H1 (cell line): ENCODE measurements at regions of chr14 and their contacts with region 1.

Region 1: GRCh38 chr14:67571272-67571850 is 28.7 kb downstream of the PIGH start:
- DNase-seq: peak; percentile 21 to 82
- H3K4me3 ChIP-seq: no peak overlapping the region
- H3K27ac ChIP-seq: no peak overlapping the region
- H3K4me1 ChIP-seq: no peaks in the 10 kb centered on the region
- H3K27me3 ChIP-seq: no peaks in the 10 kb centered on the region
- CTCF ChIP-seq: peak; percentile 92 to 97 (median 96)
- EP300 ChIP-seq: no peak
- POLR2A ChIP-seq: no peak
- RAD21 ChIP-seq: peak; percentile 85 to 87

Region 2: DNA sequence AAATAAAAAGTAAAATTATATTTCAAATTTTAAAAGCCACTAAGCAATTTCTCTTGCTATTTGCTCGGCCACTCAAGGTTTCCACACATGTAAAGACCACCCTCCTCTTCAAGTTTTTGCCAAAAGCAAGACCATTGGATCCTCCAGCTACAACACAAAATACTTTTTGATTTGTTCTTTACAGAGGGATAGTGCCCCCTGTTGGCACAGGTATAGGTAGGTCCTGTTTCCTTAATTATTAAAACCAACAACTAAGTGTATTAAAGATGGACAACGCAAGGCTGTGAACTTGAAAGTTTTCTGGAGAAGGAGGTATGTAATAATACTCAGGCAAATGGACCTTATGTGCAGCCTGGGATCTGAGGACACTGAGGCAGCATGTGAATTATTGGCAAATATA is 235.6 kb before region 1 on chr14:
- CTCF ChIA-PET with region 1: no interaction called
- POLR2A ChIA-PET with region 1: no interaction called
- DNase-seq: no peak
- H3K4me3 ChIP-seq: no peak overlapping the region
- H3K27ac ChIP-seq: no peak overlapping the region
- H3K4me1 ChIP-seq: no peaks in the 10 kb centered on the region
- H3K27me3 ChIP-seq: no peaks in the 10 kb centered on the region
- CTCF ChIP-seq: peak in 2 of 3 experiments; percentile 43 to 58; a peak in 2 of 4 replicates
- EP300 ChIP-seq: no peak
- POLR2A ChIP-seq: no peak
- RAD21 ChIP-seq: peak; percentile 55 to 56

Region 3: DNA sequence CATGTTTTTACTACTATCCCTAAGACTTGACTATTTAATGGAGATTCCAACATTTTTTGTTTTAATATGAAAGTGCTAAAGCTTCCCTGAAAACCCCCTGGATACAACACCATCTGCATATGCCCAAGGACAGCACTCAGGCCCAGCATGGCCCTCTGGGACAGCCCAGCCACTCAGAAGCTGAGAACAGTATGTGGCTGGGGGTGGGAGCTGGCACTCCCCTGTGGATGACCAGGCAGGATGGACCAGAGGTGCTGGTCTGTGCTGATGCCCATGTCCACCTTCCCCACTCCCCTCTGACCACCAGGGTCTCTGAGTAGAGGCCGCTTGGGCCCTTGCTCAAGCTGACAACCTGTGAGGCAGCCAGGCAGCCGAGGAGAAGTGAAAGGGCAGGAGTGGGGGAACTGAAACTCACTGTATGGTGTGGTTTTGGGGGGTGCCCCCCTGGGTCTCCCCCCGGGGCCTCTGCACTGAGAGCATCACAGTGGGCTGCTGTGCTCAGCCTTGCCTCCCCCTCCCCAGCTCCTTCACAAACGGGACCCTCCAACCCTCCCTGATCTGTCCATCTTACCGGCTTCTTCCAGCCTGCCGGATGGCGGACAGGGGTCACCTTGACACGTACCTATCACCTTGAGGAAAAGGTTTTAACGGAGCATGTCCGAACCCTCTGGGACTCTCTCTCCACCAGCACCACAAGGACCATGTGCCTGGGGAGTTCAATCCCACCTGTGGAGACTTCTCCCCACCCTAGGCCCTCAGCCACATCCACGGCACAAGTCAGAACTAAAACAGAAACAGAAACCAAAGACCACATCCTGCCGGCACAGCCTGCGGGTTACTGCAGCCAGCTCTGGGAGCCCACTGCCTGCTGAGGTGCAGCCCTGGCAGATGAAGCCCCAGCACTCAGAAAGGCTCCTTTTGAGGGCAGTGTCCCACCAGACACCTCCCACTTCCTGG is 83.1 kb before region 1 on chr14 and contains the start of gene TMEM229B:
- CTCF ChIA-PET with region 1: interaction called, 11 read pairs
- POLR2A ChIA-PET with region 1: no interaction called
- DNase-seq: no peak
- H3K4me3 ChIP-seq: no peak within 1 kb of the TSS
- H3K27ac ChIP-seq: no peak within 1 kb of the TSS
- H3K4me1 ChIP-seq: peaks cover 0 to 10% (median 5%) of the 10 kb centered on the region in 4 experiments; a peak in 4 of 7 replicates
- H3K27me3 ChIP-seq: no peaks in the 10 kb centered on the region
- CTCF ChIP-seq: no peak
- EP300 ChIP-seq: no peak
- POLR2A ChIP-seq: no peak
- RAD21 ChIP-seq: no peak
- total RNA-seq, gene TMEM229B: 0.50 and 0.73 TPM in 2 replicates

Region 4: DNA sequence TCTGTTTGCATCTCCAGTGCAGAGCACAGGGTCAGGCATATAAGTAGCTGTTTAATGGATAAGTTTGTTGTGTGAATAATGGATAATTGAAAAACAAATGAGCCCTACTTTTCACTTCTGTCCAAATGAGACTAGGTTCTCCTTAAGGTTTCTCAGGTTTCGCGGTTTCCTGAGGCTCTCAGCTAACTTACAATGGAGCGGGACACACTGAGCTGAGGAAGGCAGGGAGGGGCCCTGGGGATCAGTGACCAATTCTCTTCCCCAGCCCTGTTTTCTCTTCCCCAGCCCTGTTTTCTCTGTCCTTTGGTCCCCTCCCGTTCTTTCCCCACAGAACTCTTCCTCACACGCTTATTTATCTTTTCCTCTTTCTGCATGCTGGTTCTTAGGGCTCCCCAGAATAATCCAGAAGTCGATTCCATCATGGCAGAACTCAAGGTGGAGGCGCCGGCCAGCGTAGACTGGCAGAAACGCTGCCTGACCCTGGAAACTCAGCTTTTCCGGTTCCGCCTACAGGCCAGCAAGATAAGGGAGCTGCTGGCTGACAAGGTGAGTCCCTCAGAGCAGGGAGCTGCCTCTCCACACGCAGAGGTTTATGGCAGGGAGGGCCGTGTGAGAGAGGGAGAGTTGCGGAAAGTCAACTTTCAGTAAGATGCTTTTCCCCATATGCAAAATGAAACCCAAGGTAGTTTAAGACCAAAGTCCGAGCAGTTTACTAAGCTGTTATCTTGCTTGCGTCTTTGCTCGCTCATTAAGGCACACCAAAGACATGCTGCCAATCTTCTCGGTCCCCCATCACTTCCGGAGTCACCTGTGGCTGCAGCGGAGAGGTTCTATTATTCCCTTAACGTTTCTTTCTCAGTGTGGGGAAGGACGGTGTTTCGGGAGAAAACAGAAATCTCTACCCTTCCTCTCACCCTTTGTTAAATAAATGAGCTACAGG is 29.6 kb before region 1 on chr14:
- CTCF ChIA-PET with region 1: interaction called, 924 read pairs
- POLR2A ChIA-PET with region 1: interaction called, 10 read pairs
- DNase-seq: peak in 1 of 2 experiments; percentile 69
- H3K4me3 ChIP-seq: peak overlapping the region; percentile 20 to 50 (median 30); a peak in 5 of 8 replicates
- H3K27ac ChIP-seq: peak overlapping the region; percentile 76
- H3K4me1 ChIP-seq: peaks cover 6 to 20% (median 13%) of the 10 kb centered on the region in 4 experiments
- H3K27me3 ChIP-seq: no peaks in the 10 kb centered on the region
- CTCF ChIP-seq: no peak
- EP300 ChIP-seq: no peak
- POLR2A ChIP-seq: peak; percentile 66 to 75
- RAD21 ChIP-seq: no peak

Region 5: DNA sequence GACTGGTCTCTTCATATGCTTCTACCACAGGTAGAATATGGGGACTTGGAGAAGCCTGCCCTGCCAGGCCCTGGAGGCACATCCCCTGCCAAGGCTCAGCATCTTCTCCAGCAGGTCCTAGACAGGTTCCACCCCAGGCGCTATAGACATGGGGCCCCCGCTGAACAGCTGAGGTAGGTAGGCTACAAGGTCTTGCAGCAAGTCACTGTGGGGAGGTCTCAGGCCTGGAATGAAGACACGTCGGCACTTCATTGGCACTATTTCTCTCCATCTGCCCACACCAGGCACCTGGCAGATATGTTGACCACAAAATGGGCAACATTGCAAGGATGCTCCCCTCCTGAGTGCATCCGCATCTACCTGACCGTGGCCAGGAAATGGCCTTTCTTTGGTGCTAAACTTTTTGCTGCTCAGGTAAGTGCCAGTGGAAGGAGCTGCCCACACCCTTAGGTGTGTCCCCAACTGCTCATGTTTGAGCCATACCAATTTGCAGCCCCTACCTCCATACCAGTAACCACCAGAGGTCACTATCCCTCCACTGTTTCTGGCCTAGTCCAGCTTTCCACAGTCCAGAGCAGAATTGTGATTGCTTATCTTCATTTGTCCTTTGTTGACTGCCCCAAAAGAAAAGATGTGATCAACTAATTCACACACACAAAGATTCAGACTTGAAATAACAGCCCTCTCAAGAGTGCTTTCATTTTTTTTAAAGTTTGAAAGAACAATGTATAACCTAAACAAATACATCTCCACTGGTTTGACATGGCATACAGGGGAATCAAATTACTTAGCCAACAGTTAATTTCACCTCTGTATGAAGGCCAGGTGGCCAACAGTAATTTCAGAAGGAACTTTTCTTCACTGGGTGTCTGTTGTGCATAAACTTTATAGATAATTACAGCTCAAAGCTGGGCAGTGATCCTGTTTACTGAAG is 12.6 kb after region 1 on chr14:
- CTCF ChIA-PET with region 1: interaction called, 127 read pairs
- POLR2A ChIA-PET with region 1: interaction called, 6 read pairs
- DNase-seq: no peak
- H3K4me3 ChIP-seq: no peak overlapping the region
- H3K27ac ChIP-seq: no peak overlapping the region
- H3K4me1 ChIP-seq: no peaks in the 10 kb centered on the region
- H3K27me3 ChIP-seq: no peaks in the 10 kb centered on the region
- CTCF ChIP-seq: peak; percentile 54 to 83 (median 80)
- EP300 ChIP-seq: no peak
- POLR2A ChIP-seq: no peak
- RAD21 ChIP-seq: peak; percentile 89 to 90

Region 6: DNA sequence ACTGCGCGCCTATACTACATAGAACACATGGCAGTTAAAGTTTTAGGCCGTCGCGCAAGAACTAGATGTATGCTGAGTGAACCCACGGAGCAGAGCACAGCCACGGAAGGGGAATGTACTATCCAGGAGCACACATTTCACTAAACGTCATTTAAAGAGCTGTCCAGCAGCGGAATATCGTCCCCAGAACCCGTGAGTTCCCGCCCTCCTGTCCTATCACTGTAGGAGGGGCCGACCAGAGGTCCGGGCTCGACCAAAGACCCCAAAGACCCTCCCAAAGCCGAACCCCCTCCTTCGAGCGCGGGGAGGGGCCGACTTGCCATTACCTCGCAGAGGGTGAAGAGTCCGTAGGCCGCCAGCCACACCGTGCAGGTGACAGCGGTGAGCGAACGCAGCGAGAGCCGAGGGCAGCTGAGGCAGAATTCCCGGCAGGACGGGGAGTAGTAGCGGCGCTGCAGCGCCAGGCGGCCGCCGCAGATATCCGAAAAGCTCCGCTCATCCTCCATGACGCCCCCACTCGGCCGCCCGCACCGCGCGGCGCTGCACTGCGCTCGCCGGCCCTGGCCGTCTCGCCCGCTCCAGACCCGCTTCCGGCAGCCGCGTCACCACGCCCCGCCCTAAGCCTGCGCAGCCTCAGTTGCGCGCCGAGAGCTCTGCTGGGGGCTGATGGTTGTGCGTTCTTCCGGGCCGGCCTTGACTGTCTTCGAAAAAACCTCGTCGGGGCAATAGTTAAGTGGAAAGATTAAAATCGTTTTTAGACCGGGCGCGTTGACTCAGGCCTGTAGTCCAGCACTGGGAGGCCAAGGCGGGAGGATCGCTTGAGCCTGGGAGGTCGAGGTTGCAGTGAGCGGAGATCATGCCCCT is 28.6 kb after region 1 on chr14 and contains the start of gene PIGH:
- CTCF ChIA-PET with region 1: interaction called, 11 read pairs
- POLR2A ChIA-PET with region 1: no interaction called
- DNase-seq: peak; percentile 46 to 95
- H3K4me3 ChIP-seq: peak within 1 kb of the TSS; percentile 60 to 79 (median 70)
- H3K27ac ChIP-seq: no peak within 1 kb of the TSS
- H3K4me1 ChIP-seq: no peaks in the 10 kb centered on the region; a peak in 1 of 7 replicates
- H3K27me3 ChIP-seq: peaks cover 4 to 41% (median 22%) of the 10 kb centered on the region in 4 experiments
- CTCF ChIP-seq: peak; percentile 53 to 97 (median 66)
- EP300 ChIP-seq: no peak
- POLR2A ChIP-seq: peak in 1 of 2 experiments; percentile 59; a peak in 2 of 3 replicates
- RAD21 ChIP-seq: peak; percentile 37 to 51; a peak in 3 of 4 replicates
- total RNA-seq, gene PIGH: 6.2 and 7.2 TPM in 2 replicates

Region 7: DNA sequence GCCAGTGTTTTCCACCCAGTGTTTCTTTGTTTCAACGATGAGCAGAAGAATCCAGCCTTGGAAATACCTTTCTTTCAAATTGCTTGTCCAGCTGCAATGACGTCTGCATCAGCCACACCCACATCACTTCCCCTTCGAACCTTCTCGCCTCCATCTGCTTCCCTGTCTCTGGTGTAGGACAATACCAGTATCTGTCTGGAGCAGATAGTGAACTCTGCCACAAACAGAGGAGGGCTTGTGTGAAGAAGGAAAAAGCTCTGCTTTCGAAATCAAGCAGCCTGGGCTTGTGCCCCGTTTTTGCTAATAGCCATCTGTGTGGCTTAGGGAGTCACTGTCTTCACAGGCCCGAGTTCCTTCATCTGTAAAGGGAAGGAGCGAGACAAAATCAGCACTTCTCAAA is 806.1 kb after region 1 on chr14:
- CTCF ChIA-PET with region 1: no interaction called
- POLR2A ChIA-PET with region 1: no interaction called
- DNase-seq: no peak
- H3K4me3 ChIP-seq: no peak overlapping the region
- H3K27ac ChIP-seq: no peak overlapping the region
- H3K4me1 ChIP-seq: peaks cover 0 to 4% (median under 1%) of the 10 kb centered on the region in 4 experiments; a peak in 2 of 7 replicates
- H3K27me3 ChIP-seq: no peaks in the 10 kb centered on the region
- CTCF ChIP-seq: no peak
- EP300 ChIP-seq: no peak
- POLR2A ChIP-seq: no peak
- RAD21 ChIP-seq: no peak